Activated CD4-positive, alpha-beta T cell treated with anti-CD3 and anti-CD28 coated beads for 36 hours (primary cell): ENCODE measurements at regions of chr9 and their contacts with region 1.

Region 1: GRCh38 chr9:93134015-93134739 is at the start of gene NINJ1:
- DNase-seq: peak; percentile 95
- ATAC-seq: peak; percentile 83
- H3K4me3 Mint-ChIP-seq: peak within 1 kb of the TSS; percentile 88
- H3K27ac Mint-ChIP-seq: peak within 1 kb of the TSS; percentile 92
- H3K4me1 Mint-ChIP-seq: peaks cover 63% of the 10 kb centered on the region
- H3K27me3 Mint-ChIP-seq: no peaks in the 10 kb centered on the region
- total RNA-seq, gene NINJ1: 77.4 to 108 TPM

Region 2: DNA sequence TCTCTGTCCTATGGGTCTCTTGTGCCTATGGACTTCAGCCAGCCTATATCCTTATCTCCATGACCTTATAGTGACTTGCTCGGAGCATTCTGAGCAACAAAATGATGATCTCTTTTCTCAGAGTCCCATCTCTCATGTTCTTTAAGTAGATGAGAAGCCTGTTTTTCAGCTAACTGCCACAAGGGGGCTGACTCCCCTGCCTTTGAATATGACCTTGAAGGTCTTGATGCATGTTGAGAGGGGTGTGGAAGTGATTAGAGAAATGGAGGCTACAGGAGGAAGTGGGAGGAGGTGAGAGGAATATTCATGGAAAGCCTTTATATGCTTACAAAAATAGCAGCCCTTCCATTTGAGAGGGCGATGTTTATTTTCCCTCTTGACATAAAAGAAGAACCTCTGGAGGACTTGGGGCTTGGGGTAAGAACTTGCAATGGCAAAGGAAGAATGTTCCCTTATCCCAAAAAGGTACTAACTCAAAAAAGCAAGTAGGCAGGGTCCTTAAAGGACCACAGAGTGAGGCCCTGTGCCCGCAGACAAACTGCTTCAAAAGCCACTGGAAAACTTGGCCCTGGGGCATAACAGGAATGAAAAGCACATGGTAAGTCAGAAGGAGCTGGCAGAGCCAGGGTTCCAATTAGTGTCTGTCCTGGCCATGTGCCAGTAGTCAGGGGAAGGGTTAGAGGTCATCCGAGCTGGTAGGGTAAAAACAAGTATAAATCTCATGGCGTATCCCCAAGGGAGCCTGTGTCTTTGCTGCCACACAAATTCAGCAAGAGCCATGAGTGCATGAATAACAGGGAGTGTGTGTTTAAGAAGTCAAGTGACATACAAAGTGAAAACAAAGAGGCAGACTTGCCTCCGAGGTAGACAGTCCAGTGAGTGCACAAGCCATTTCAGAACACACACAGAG is 147.7 kb before region 1 on chr9:
- CTCF ChIA-PET with region 1: no interaction called
- POLR2A ChIA-PET with region 1: no interaction called
- intact Hi-C with region 1: no loop called
- DNase-seq: peak; percentile 69
- ATAC-seq: no peak
- H3K4me3 Mint-ChIP-seq: no peak overlapping the region
- H3K27ac Mint-ChIP-seq: peak overlapping the region; percentile 87
- H3K4me1 Mint-ChIP-seq: peaks cover 76% of the 10 kb centered on the region
- H3K27me3 Mint-ChIP-seq: no peaks in the 10 kb centered on the region

Region 3: DNA sequence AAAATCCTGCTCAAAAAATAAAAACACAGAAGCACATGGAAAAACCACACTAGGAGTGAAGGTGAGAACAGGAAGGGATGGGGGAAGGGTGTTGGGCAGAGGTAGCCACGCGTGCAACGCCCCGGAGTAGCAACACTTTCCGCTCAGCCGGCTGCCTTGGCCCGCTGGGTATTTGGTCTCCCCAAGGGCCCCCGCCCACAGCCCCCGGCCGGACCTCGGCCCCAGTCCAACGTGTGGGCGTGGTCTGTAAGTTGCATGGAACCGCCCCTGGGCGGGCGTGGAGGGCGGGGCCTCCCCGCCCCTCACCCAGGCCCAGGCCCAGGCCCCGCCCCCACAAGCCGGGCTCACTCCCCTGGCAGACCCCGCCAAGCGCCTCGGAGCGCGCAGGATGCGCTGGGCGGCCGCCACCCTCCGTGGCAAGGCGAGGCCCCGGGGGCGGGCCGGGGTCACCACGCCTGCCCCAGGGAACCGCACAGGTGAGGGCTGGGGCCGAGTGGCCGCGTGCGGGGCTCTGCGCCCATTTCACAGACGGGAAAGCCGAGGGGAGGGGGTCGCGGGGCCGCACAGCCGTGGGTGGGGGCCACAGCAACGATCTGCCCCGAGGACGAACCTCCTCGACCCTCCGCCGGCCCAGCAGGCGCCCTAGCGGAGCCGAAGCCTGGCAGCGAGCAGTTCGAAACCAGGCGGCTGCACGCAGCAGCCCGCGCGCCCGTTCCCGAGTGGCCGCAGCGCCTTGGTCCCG is 75.7 kb before region 1 on chr9 and contains the start of gene SUSD3:
- CTCF ChIA-PET with region 1: interaction called, 3 read pairs
- POLR2A ChIA-PET with region 1: no interaction called
- intact Hi-C with region 1: loop called in 1 of 2 experiments (anchors 1 kb)
- DNase-seq: peak; percentile 86
- ATAC-seq: peak; percentile 66
- H3K4me3 Mint-ChIP-seq: peak within 1 kb of the TSS; percentile 90
- H3K27ac Mint-ChIP-seq: peak within 1 kb of the TSS; percentile 98
- H3K4me1 Mint-ChIP-seq: peaks cover 55% of the 10 kb centered on the region
- H3K27me3 Mint-ChIP-seq: no peaks in the 10 kb centered on the region
- total RNA-seq, gene SUSD3: 51.4 to 57.9 TPM

Region 4: GRCh38 chr9:93064392-93065134 is 69.6 kb before region 1 on chr9:
- CTCF ChIA-PET with region 1: no interaction called
- POLR2A ChIA-PET with region 1: no interaction called
- intact Hi-C with region 1: loop called in 1 of 2 experiments (anchors 1 kb)
- DNase-seq: peak; percentile 96
- ATAC-seq: peak; percentile 90
- H3K4me3 Mint-ChIP-seq: peak overlapping the region; percentile 76
- H3K27ac Mint-ChIP-seq: peak overlapping the region; percentile 98
- H3K4me1 Mint-ChIP-seq: peaks cover 94% of the 10 kb centered on the region
- H3K27me3 Mint-ChIP-seq: no peaks in the 10 kb centered on the region

Region 5: GRCh38 chr9:93183609-93184431 is 49.6 kb after region 1 on chr9 and contains the start of gene WNK2:
- CTCF ChIA-PET with region 1: no interaction called
- POLR2A ChIA-PET with region 1: no interaction called
- intact Hi-C with region 1: loop called in 1 of 2 experiments (anchors 1 kb)
- DNase-seq: peak; percentile 56
- ATAC-seq: peak; percentile 80
- H3K4me3 Mint-ChIP-seq: peak within 1 kb of the TSS; percentile 63
- H3K27ac Mint-ChIP-seq: no peak within 1 kb of the TSS
- H3K4me1 Mint-ChIP-seq: peaks cover 9% of the 10 kb centered on the region
- H3K27me3 Mint-ChIP-seq: peaks cover 24% of the 10 kb centered on the region
- total RNA-seq, gene WNK2: 3.3 to 4.6 TPM